HAP-1 (cell line): ENCODE measurements at regions of chr20 and their contacts with region 1.

Region 1: GRCh38 chr20:63009045-63009961 is 2.5 kb upstream of the BHLHE23 start:
- DNase-seq: peak; percentile 41 to 88
- H3K4me3 ChIP-seq: no peak overlapping the region
- H3K4me1 ChIP-seq: no peaks in the 10 kb centered on the region
- H3K27me3 ChIP-seq: peaks cover 89% of the 10 kb centered on the region

Region 2: GRCh38 chr20:62723351-62723750 is 286.0 kb before region 1 on chr20:
- in situ Hi-C with region 1: no loop called
- DNase-seq: no peak
- H3K4me3 ChIP-seq: no peak overlapping the region
- H3K4me1 ChIP-seq: no peaks in the 10 kb centered on the region
- H3K27me3 ChIP-seq: peaks cover 19% of the 10 kb centered on the region

Region 3: GRCh38 chr20:62900052-62900691 is 109.1 kb before region 1 on chr20:
- in situ Hi-C with region 1: loop called (anchors 10 kb)
- DNase-seq: peak; percentile 61 to 83
- H3K4me3 ChIP-seq: no peak overlapping the region
- H3K4me1 ChIP-seq: no peaks in the 10 kb centered on the region
- H3K27me3 ChIP-seq: no peaks in the 10 kb centered on the region